GM12878 (cell line): ENCODE measurements at regions of chr3 and their contacts with region 1.

Region 1: DNA sequence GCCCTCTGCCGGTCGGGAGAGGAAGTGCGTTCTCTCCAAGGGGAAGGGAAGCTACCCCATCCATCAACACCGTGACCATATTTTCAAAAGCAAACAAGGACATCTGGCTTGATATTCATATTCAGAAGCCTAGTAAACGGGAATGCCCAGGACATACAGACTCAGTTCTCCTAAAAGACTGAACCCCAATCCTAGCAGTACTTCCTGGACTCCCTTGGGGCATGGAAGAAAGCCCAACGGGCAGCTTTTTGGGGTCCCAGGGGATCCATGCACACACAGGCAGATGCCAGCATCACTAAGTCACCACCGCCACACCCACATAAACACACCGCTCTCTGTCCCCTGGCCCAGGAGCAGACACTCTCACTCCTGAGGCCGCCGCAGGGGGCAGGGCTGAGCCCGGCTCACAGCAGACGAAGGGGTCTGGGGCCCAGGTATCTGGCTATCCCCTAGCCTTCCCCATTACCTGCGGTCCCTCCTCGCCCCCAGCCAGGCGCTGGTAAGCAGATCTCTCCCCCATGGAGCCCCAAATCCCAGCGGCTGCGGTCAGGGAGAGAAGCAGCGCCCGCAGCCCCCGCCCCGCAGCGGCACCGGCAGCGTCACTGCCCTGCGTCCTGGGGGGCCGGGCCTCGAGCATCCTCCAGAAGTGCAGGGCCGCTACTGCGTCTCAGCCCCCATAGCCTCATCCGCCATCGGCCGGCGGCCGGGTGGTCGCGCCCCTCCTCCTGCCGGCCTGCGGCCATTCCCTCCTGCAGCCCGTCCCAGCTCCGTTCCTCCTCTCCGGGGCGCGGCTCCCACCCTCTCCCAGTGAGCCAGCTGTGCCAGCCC is 13.4 kb downstream of the TNK2 start:
- DNase-seq: peak; percentile 42
- ATAC-seq: peak; percentile 89
- H3K4me3 ChIP-seq: peak overlapping the region; percentile 90
- H3K27ac ChIP-seq: peak overlapping the region; percentile 79; the same call in 1 of the 2 replicates
- H3K4me1 ChIP-seq: peaks cover 19% of the 10 kb centered on the region
- H3K27me3 ChIP-seq: no peaks in the 10 kb centered on the region
- CTCF ChIP-seq: peak; percentile 87 to 96 (median 91)
- EP300 ChIP-seq: no peak
- POLR2A ChIP-seq: peak; percentile 70
- RAD21 ChIP-seq: peak; percentile 90

Region 2: DNA sequence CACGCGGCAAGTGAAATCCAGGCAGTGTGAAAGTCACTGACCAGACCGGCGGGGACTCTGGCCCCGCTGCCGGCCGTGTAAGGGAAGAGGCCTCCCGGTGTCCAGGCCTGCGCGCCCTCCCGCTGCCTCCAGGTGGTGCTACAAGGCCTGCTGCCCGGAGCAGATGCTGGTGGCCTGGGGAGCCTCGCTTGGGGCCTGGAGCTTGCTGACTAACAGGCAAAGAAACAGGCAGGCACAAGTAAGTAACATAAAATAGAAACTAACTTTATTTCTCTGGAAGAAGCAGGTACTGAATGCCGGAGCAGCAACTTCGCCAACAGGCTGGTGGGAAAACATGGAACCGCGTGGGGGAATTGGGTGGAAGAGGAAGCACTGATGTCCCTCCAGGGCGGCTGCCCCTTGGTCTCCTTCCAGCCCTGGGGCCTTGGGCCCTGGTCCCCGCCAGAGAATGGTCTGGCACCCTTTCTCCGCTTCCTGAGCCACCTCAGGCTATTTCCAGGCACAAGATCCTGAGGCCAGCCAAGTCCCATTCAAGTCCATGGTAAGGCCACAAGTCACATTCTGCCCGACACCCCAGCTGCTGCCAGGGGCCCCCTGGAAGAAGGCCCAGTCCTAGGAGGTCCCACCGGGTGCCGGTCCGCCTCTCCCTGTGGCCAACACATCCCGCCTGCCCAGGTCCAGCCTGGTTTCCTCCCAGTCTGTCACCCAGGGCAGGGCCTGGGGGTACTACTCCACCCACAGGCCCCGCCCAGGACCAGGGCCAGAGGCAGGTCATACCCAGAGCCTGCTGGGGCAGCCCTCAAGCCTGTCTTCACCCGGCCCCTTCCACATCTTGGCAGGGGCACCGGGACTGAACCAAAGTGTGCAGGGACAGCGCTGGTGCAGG is 31.6 kb before region 1 on chr3:
- CTCF ChIA-PET with region 1: interaction called, 70 read pairs
- POLR2A ChIA-PET with region 1: interaction called, 3 read pairs
- RAD21 ChIA-PET with region 1: interaction called, 9 read pairs
- SMC1A ChIA-PET with region 1: interaction called, 11 read pairs
- in situ Hi-C with region 1: loop called (anchors 5 kb)
- intact Hi-C with region 1: loop called (anchors 1 kb)
- DNase-seq: no peak
- ATAC-seq: peak; percentile 97
- H3K4me3 ChIP-seq: no peak overlapping the region
- H3K27ac ChIP-seq: no peak overlapping the region
- H3K4me1 ChIP-seq: no peaks in the 10 kb centered on the region
- H3K27me3 ChIP-seq: no peaks in the 10 kb centered on the region
- CTCF ChIP-seq: peak; percentile 77 to 96 (median 80)
- EP300 ChIP-seq: no peak
- POLR2A ChIP-seq: no peak
- RAD21 ChIP-seq: peak; percentile 62

Region 3: GRCh38 chr3:195921334-195921791 is 26.4 kb after region 1 on chr3:
- CTCF ChIA-PET with region 1: interaction called, 94 read pairs
- POLR2A ChIA-PET with region 1: no interaction called
- RAD21 ChIA-PET with region 1: interaction called, 3 read pairs
- SMC1A ChIA-PET with region 1: interaction called, 5 read pairs
- in situ Hi-C with region 1: no loop called
- intact Hi-C with region 1: no loop called
- DNase-seq: no peak
- ATAC-seq: no peak
- H3K4me3 ChIP-seq: no peak overlapping the region
- H3K27ac ChIP-seq: no peak overlapping the region
- H3K4me1 ChIP-seq: no peaks in the 10 kb centered on the region
- H3K27me3 ChIP-seq: no peaks in the 10 kb centered on the region
- CTCF ChIP-seq: no peak
- EP300 ChIP-seq: no peak
- POLR2A ChIP-seq: no peak
- RAD21 ChIP-seq: no peak

Region 4: DNA sequence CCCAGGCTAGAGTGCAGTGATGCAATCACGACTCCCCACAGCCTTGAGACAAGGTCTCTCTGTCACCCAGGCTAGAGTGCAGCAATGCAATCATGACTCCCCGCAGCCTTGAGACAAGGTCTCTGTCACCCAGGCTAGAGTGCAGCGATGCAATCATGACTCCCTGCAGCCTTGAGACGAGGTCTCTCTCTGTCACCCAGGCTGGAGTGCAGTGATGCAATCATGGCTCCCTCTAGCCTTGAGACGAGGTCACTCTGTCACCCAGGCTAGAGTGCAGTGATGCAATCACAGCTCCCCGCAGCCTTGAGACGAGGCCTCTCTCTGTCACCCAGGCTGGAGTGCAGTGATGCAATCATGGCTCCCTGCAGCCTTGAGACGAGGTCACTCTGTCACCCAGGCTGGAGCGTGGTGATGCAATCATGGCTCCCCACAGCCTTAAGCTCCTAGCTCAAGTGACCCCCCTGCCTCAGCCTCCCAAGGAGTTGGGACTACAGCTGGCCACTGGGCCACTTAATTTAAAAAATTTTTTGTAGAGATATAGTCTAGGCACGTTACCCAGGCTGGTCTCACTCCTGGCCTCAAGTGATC is 160.8 kb after region 1 on chr3:
- CTCF ChIA-PET with region 1: no interaction called
- POLR2A ChIA-PET with region 1: no interaction called
- RAD21 ChIA-PET with region 1: no interaction called
- SMC1A ChIA-PET with region 1: no interaction called
- in situ Hi-C with region 1: no loop called
- intact Hi-C with region 1: no loop called
- DNase-seq: no peak
- ATAC-seq: no peak; the same call in 1 of the 3 replicates
- H3K4me3 ChIP-seq: no peak overlapping the region
- H3K27ac ChIP-seq: no peak overlapping the region
- H3K4me1 ChIP-seq: no peaks in the 10 kb centered on the region
- H3K27me3 ChIP-seq: no peaks in the 10 kb centered on the region
- CTCF ChIP-seq: no peak
- EP300 ChIP-seq: no peak
- POLR2A ChIP-seq: no peak
- RAD21 ChIP-seq: no peak